GM12878 (cell line): ENCODE measurements at regions of chr12 and their contacts with region 1.

Region 1: DNA sequence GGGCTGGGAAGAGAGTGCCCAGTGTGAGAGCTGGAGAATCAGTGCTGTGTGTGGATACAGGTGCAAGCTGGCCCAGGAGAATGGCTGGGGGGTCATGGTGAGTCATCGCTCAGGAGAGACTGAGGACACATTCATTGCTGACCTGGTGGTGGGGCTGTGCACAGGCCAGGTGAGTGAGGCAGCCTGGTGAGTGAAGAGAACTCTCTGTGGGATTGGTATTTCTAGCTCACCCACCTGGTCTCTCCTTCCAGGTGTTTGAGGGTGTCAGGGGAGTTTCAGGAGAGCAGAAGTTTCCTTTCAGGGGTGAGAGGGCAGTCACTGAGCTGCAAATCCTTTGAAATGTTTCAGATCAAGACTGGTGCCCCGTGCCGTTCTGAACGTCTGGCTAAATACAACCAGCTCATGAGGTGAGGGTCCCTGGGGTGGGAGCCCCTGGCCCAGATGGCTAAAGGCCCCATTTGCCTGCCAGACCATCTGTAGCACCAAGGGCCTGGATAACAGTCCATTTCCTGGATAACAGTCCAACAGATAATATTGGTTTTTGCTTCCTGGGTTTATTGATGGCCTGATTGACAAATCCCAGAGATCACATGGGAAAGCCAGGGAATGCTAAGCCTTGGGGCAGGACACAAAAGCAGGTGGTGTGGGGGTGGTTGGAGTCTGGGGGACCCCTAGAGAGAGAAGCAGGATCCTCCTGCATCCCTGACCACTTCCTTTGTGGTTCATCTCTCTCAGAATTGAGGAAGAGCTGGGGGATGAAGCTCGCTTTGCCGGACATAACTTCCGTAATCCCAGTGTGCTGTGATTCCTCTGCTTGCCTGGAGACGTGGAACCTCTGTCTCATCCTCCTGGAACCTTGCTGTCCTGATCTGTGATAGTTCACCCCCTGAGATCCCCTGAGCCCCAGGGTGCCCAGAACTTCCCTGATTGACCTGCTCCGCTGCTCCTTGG is 5.5 kb upstream of the ATN1 start:
- DNase-seq: no peak
- ATAC-seq: peak; percentile 32
- H3K4me3 ChIP-seq: peak overlapping the region; percentile 4; the same call in 1 of the 2 replicates
- H3K27ac ChIP-seq: peak overlapping the region; percentile 36
- H3K4me1 ChIP-seq: peaks cover 48% of the 10 kb centered on the region
- H3K27me3 ChIP-seq: no peaks in the 10 kb centered on the region
- CTCF ChIP-seq: 0 out of 6 replicates have a peak, but pooled peaks of 1 of the 3 experiments have one; percentile 13
- EP300 ChIP-seq: no peak
- POLR2A ChIP-seq: no peak
- RAD21 ChIP-seq: no peak

Region 2: GRCh38 chr12:7092229-7092985 is 170.1 kb after region 1 on chr12 and contains the start of gene C1R:
- CTCF ChIA-PET with region 1: interaction called, 4 read pairs
- POLR2A ChIA-PET with region 1: interaction called, 3 read pairs
- RAD21 ChIA-PET with region 1: no interaction called
- SMC1A ChIA-PET with region 1: no interaction called
- in situ Hi-C with region 1: no loop called
- intact Hi-C with region 1: loop called (anchors 5 kb)
- DNase-seq: no peak
- ATAC-seq: peak; percentile 90
- H3K4me3 ChIP-seq: peak within 1 kb of the TSS; percentile 72; the same call in 1 of the 2 replicates
- H3K27ac ChIP-seq: no peak within 1 kb of the TSS; the same call in 1 of the 2 replicates
- H3K4me1 ChIP-seq: no peaks in the 10 kb centered on the region
- H3K27me3 ChIP-seq: no peaks in the 10 kb centered on the region; a peak in 1 of 4 replicates
- CTCF ChIP-seq: peak; percentile 85 to 89 (median 88)
- EP300 ChIP-seq: no peak
- POLR2A ChIP-seq: no peak; the same call in 1 of the 2 replicates
- RAD21 ChIP-seq: peak; percentile 76
- polyA plus RNA-seq, gene C1R: 0.31 TPM in 1 of 2 experiments, not detected in the other